PC-9 (cell line): ENCODE measurements at regions of chr18 and their contacts with region 1.

Region 1: DNA sequence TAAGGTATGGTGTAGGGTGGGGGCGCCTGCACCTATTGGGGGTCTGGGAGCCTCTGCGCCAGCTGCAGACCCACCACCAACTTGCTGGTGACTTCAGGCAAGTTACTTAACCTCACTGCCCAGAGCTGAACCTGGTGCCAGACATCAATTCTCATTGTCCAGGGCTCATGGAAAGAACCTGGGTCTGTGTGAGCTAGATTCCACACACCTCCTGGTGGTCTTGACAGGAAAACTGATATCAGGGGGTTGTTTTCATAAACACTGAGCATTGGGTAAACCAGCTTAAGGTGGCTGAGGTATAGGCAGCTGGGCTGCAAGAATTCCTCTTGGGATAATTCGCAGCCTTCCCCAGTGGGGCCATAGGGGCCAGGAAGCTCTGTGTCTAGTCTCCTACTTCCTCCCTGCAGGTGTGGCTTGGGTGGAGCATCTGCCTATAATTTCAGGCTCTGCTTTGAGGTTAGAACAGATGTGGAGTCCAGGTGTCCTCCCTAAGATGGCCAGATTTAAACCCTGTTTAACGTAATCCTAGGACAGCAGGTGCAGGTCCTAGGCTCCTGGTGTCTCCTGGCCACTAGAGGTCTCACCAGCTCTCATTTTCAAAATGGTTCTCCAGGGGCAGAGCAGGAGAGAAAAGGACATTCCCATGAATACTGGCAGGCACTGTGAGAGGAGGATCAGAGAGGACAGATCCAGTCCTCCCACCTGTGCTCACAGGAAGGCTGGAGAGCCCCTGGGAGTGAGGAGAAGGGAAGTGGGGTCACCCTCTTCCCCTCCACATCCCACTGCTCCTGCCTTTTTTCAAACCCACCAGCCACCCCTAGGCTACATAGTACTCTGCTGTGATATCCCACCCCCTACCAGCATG is 100.4 kb upstream of the SMAD2 start:
- DNase-seq: peak; percentile 38 to 61
- H3K4me3 ChIP-seq: no peak overlapping the region
- H3K27ac ChIP-seq: no peak overlapping the region
- H3K4me1 ChIP-seq: peaks cover 33% of the 10 kb centered on the region
- H3K27me3 ChIP-seq: no peaks in the 10 kb centered on the region
- CTCF ChIP-seq: peak; percentile 83

Region 2: DNA sequence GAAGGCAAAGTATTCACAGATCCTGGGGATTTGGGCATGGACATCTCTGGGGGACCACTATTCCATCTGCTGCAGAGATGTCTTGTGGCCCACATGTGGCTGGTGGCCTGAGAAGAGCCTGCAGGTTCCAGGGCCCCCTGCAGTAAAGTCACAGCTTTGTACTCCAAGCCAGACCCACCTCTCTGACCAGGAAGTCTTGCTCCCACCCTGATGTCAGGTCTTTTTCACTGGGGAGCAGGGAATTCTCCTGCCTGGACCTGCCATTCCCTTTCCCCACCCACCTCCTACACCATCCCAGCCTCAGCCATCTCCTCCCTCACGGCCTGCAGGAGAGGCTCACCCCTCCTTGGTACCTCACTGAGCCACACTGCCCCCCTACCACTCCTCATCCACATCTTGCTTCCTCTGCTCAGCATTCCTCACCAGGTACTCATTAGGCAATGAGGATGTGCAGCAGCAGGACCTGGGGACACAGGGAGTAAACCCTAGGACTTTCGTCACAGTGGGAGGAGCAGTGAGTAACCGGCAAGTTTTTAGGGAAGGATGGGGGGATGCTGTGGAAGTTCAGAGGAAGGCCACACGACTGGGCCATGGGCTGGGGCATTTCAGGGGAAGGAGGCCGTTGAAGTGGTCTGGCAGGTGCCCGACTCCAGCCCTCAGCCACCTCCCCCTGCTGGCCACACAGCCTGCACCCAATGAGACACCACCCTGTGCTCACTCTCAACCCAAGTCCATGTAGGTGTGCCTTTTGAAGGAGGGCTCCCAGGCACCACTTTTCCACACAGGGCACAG is 312.0 kb before region 1 on chr18:
- CTCF ChIA-PET with region 1: no interaction called
- POLR2A ChIA-PET with region 1: no interaction called
- intact Hi-C with region 1: no loop called
- DNase-seq: no peak
- H3K4me3 ChIP-seq: no peak overlapping the region
- H3K27ac ChIP-seq: no peak overlapping the region
- H3K4me1 ChIP-seq: no peaks in the 10 kb centered on the region
- H3K27me3 ChIP-seq: peaks cover 57% of the 10 kb centered on the region
- CTCF ChIP-seq: no peak

Region 3: GRCh38 chr18:48230467-48231113 is 199.7 kb after region 1 on chr18:
- CTCF ChIA-PET with region 1: no interaction called
- POLR2A ChIA-PET with region 1: no interaction called
- intact Hi-C with region 1: loop called (anchors 5 kb)
- DNase-seq: peak; percentile 55 to 59
- H3K4me3 ChIP-seq: no peak overlapping the region
- H3K27ac ChIP-seq: no peak overlapping the region
- H3K4me1 ChIP-seq: peaks cover 50% of the 10 kb centered on the region
- H3K27me3 ChIP-seq: no peaks in the 10 kb centered on the region
- CTCF ChIP-seq: peak; percentile 77

Region 4: GRCh38 chr18:48345596-48345995 is 314.7 kb after region 1 on chr18:
- CTCF ChIA-PET with region 1: no interaction called
- POLR2A ChIA-PET with region 1: no interaction called
- intact Hi-C with region 1: loop called (anchors 5 kb)
- DNase-seq: no peak
- H3K4me3 ChIP-seq: no peak overlapping the region
- H3K27ac ChIP-seq: no peak overlapping the region
- H3K4me1 ChIP-seq: no peaks in the 10 kb centered on the region
- H3K27me3 ChIP-seq: no peaks in the 10 kb centered on the region
- CTCF ChIP-seq: peak; percentile 53

Region 5: DNA sequence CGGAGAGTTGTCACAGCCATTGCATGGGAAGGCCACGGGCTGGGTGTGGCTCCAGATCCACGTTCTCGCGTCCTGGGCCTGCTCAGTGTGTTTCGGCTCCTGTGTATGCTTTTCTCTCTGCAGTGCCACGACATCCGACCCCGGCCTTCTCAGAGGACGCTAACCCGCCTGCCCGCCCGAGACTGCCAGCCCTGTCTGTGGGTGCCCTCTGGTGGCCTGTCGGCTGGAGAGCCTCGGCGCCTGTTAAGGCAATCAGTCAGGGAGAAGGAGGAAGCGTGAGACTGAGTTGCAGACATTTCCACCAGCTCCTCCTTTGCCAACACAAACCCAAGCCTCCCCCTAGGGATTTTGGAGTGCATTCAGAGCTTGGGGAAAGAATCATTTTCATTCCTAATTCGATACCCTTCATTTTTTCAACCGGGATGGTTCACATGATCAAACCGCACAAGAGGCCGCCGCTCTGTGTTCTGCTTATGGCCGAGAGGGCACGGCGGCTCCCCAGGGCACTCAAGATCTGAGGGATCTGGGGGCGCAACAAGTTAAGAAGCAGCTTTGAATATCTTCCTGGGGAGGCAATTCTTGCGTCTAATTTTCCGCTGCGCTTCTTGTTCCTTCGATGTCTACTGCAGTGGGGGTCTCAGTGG is 415.9 kb after region 1 on chr18:
- CTCF ChIA-PET with region 1: interaction called, 3 read pairs
- POLR2A ChIA-PET with region 1: no interaction called
- intact Hi-C with region 1: loop called (anchors 2 kb)
- DNase-seq: peak; percentile 69 to 70
- H3K4me3 ChIP-seq: no peak overlapping the region
- H3K27ac ChIP-seq: no peak overlapping the region
- H3K4me1 ChIP-seq: peaks cover 17% of the 10 kb centered on the region
- H3K27me3 ChIP-seq: no peaks in the 10 kb centered on the region
- CTCF ChIP-seq: peak; percentile 91

Region 6: DNA sequence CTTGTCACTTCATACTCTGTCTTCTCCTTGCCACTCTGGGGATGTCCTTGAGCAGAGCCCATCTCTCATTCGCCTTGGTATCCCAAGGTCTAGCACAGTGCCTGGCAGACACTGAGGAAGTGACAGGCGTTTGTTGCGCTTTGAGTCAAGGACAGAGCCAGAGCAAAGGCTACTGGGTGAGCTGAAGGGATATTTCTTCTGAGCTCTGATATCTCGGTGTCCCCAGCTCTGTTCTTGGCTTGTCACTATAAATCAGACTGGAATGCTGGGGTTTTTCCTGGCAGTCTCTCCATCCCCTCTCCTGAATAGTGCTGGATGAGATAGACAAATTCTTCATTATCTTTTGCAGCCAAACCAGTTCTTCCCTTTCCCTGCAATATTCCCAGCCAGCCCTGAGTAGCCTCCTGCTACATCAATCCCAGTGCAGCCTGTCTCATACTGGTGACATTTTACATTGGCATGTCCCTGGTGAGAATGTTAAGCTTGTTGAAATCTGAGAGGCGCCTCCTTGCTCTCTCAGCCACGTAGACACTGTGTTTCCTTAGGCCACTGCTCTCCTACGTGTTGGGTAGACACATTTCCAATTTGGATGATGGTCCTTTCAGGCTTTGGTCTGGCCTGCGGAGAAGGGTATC is 569.7 kb after region 1 on chr18:
- CTCF ChIA-PET with region 1: no interaction called
- POLR2A ChIA-PET with region 1: no interaction called
- intact Hi-C with region 1: no loop called
- DNase-seq: peak in 1 of 2 experiments; percentile 17
- H3K4me3 ChIP-seq: no peak overlapping the region
- H3K27ac ChIP-seq: no peak overlapping the region
- H3K4me1 ChIP-seq: no peaks in the 10 kb centered on the region
- H3K27me3 ChIP-seq: no peaks in the 10 kb centered on the region
- CTCF ChIP-seq: no peak

Region 7: GRCh38 chr18:49447810-49448745 is 1417.2 kb after region 1 on chr18:
- CTCF ChIA-PET with region 1: no interaction called
- POLR2A ChIA-PET with region 1: no interaction called
- intact Hi-C with region 1: loop called (anchors 10 kb)
- DNase-seq: peak; percentile 12 to 49
- H3K4me3 ChIP-seq: no peak overlapping the region
- H3K27ac ChIP-seq: no peak overlapping the region
- H3K4me1 ChIP-seq: no peaks in the 10 kb centered on the region
- H3K27me3 ChIP-seq: no peaks in the 10 kb centered on the region
- CTCF ChIP-seq: peak; percentile 79